Cardiac septum (tissue), 1 donor: ENCODE measurements at regions of chr3 and their contacts with region 1.

Region 1: DNA sequence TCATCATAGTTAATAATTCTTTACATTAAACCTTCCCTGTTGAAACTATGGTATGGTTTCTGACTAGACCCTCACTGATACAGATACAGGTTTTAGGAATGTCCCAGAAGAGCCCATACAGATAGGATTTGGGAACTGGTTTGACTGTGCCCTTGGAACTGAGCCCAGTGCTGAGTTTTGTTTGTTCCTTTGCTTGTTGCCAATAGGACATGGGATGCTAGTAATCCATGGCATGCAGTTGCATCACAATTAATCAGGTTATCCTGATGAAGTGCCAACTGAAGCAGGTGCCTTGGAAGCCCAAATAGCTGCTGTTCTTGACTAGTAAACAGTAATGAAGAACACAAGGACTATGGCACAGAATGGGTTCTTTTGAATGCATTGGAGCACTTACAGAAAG is 230.6 kb downstream of the NEK10 start:
- DNase-seq: no peak

Region 2: GRCh38 chr3:27253831-27254230 is 115.3 kb after region 1 on chr3:
- intact Hi-C with region 1: loop called (anchors 5 kb)
- DNase-seq: no peak